CD4-positive, alpha-beta memory T cell (primary cell): ENCODE measurements at regions of chr15 and their contacts with region 1.

Region 1: GRCh38 chr15:40593588-40594428 is at the start of gene KNL1:
- DNase-seq: peak; percentile 89 to 93 (median 91)
- H3K4me3 ChIP-seq: peak within 1 kb of the TSS; percentile 36 to 94
- H3K4me3 Mint-ChIP-seq: peak within 1 kb of the TSS; percentile 93 to 100 (median 96)
- H3K27ac ChIP-seq: peak within 1 kb of the TSS; percentile 90
- H3K27ac Mint-ChIP-seq: peak within 1 kb of the TSS; percentile 96 to 100 (median 99)
- H3K4me1 ChIP-seq: peaks cover 31% of the 10 kb centered on the region
- H3K4me1 Mint-ChIP-seq: peaks cover 18 to 46% (median 31%) of the 10 kb centered on the region in 4 donors
- H3K27me3 ChIP-seq: no peaks in the 10 kb centered on the region
- H3K27me3 Mint-ChIP-seq: peaks cover 0 to 2% of the 10 kb centered on the region in 2 donors
- total RNA-seq, gene KNL1: 0.99 to 1.2 TPM

Region 2: GRCh38 chr15:40564591-40565332 is 29.0 kb before region 1 on chr15 and contains the start of gene CCDC32:
- CTCF ChIA-PET with region 1: interaction called, 16 read pairs
- POLR2A ChIA-PET with region 1: interaction called, 18 read pairs
- intact Hi-C with region 1: loop called (anchors 1 kb)
- DNase-seq: peak; percentile 93 to 98 (median 96)
- H3K4me3 ChIP-seq: peak within 1 kb of the TSS; percentile 97 to 98
- H3K4me3 Mint-ChIP-seq: peak within 1 kb of the TSS; percentile 95 to 98 (median 97)
- H3K27ac ChIP-seq: peak within 1 kb of the TSS; percentile 92
- H3K27ac Mint-ChIP-seq: peak within 1 kb of the TSS; percentile 89 to 99 (median 98)
- H3K4me1 ChIP-seq: peaks cover 34% of the 10 kb centered on the region
- H3K4me1 Mint-ChIP-seq: peaks cover 26 to 65% (median 42%) of the 10 kb centered on the region in 4 donors
- H3K27me3 ChIP-seq: no peaks in the 10 kb centered on the region
- H3K27me3 Mint-ChIP-seq: no peaks in the 10 kb centered on the region
- total RNA-seq, gene CCDC32: 31.7 to 32.4 TPM

Region 3: DNA sequence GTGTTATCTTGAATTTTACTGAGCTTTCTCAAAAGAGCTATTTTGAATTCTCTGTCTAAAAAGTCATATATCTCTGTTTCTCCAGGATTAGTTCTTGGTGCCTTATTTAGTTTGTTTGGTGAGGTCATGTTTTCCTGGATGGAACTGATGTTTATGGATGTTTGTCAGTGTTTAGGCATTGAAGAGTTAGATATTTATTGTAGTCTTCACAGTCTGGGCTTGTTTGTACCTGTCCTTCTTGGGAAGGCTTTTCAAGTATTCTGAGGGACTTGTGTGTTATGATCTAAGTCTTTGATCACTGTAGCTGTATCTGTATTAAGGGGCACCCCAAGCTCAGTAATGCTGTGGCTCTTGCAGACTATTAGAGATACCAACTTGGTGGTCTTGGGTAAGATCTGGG is 90.6 kb after region 1 on chr15:
- CTCF ChIA-PET with region 1: interaction called, 14 read pairs
- POLR2A ChIA-PET with region 1: no interaction called
- intact Hi-C with region 1: loop called (anchors 5 kb)
- DNase-seq: no peak
- H3K4me3 ChIP-seq: no peak overlapping the region
- H3K4me3 Mint-ChIP-seq: no peak overlapping the region
- H3K27ac ChIP-seq: no peak overlapping the region
- H3K27ac Mint-ChIP-seq: peak overlapping the region in 2 of 7 donors; percentile 51 to 64
- H3K4me1 ChIP-seq: no peaks in the 10 kb centered on the region
- H3K4me1 Mint-ChIP-seq: no peaks in the 10 kb centered on the region
- H3K27me3 ChIP-seq: no peaks in the 10 kb centered on the region
- H3K27me3 Mint-ChIP-seq: no peaks in the 10 kb centered on the region

Region 4: GRCh38 chr15:40754883-40755811 is 161.3 kb after region 1 on chr15 and contains the start of gene RMDN3:
- CTCF ChIA-PET with region 1: no interaction called
- POLR2A ChIA-PET with region 1: interaction called, 3 read pairs
- intact Hi-C with region 1: loop called (anchors 10 kb)
- DNase-seq: peak; percentile 90 to 93 (median 92)
- H3K4me3 ChIP-seq: peak within 1 kb of the TSS; percentile 65 to 96
- H3K4me3 Mint-ChIP-seq: peak within 1 kb of the TSS; percentile 91 to 99 (median 94)
- H3K27ac ChIP-seq: peak within 1 kb of the TSS; percentile 85
- H3K27ac Mint-ChIP-seq: peak within 1 kb of the TSS; percentile 82 to 98 (median 95)
- H3K4me1 ChIP-seq: peaks cover 31% of the 10 kb centered on the region
- H3K4me1 Mint-ChIP-seq: peaks cover 11 to 40% (median 26%) of the 10 kb centered on the region in 4 donors
- H3K27me3 ChIP-seq: no peaks in the 10 kb centered on the region
- H3K27me3 Mint-ChIP-seq: no peaks in the 10 kb centered on the region
- total RNA-seq, gene RMDN3: 24.5 to 26.7 TPM

Region 5: GRCh38 chr15:40782580-40783227 is 188.9 kb after region 1 on chr15:
- CTCF ChIA-PET with region 1: interaction called, 53 read pairs
- POLR2A ChIA-PET with region 1: interaction called, 4 read pairs
- intact Hi-C with region 1: loop called (anchors 1 kb)
- DNase-seq: peak; percentile 74 to 79 (median 75)
- H3K4me3 ChIP-seq: no peak overlapping the region
- H3K4me3 Mint-ChIP-seq: no peak overlapping the region
- H3K27ac ChIP-seq: no peak overlapping the region
- H3K27ac Mint-ChIP-seq: peak overlapping the region in 3 of 7 donors; percentile 23 to 73 (median 70)
- H3K4me1 ChIP-seq: peaks cover 12% of the 10 kb centered on the region
- H3K4me1 Mint-ChIP-seq: peaks cover 13 to 24% (median 17%) of the 10 kb centered on the region in 4 donors
- H3K27me3 ChIP-seq: no peaks in the 10 kb centered on the region
- H3K27me3 Mint-ChIP-seq: no peaks in the 10 kb centered on the region

Region 6: GRCh38 chr15:40807028-40807887 is 213.4 kb after region 1 on chr15 and contains the starts of genes DNAJC17 and ZFYVE19:
- CTCF ChIA-PET with region 1: interaction called, 3 read pairs
- POLR2A ChIA-PET with region 1: no interaction called
- intact Hi-C with region 1: loop called (anchors 1 kb)
- DNase-seq: peak; percentile 90 to 97 (median 91)
- H3K4me3 ChIP-seq: peak within 1 kb of the TSS; percentile 95 to 100
- H3K4me3 Mint-ChIP-seq: peak within 1 kb of the TSS; percentile 96 to 100 (median 98)
- H3K27ac ChIP-seq: peak within 1 kb of the TSS; percentile 97
- H3K27ac Mint-ChIP-seq: peak within 1 kb of the TSS; percentile 92 to 100 (median 98)
- H3K4me1 ChIP-seq: peaks cover 20% of the 10 kb centered on the region
- H3K4me1 Mint-ChIP-seq: peaks cover 15 to 33% (median 22%) of the 10 kb centered on the region in 4 donors
- H3K27me3 ChIP-seq: no peaks in the 10 kb centered on the region
- H3K27me3 Mint-ChIP-seq: no peaks in the 10 kb centered on the region
- total RNA-seq, gene DNAJC17: 40.5 to 43.9 TPM
- total RNA-seq, gene ZFYVE19: 34.1 to 35.0 TPM

Region 7: GRCh38 chr15:41116116-41116871 is 522.5 kb after region 1 on chr15 and contains the start of gene INO80:
- CTCF ChIA-PET with region 1: no interaction called
- POLR2A ChIA-PET with region 1: no interaction called
- intact Hi-C with region 1: loop called (anchors 5 kb)
- DNase-seq: peak; percentile 96 to 97 (median 97)
- H3K4me3 ChIP-seq: peak within 1 kb of the TSS; percentile 95 to 100
- H3K4me3 Mint-ChIP-seq: peak within 1 kb of the TSS; percentile 93 to 99 (median 96)
- H3K27ac ChIP-seq: peak within 1 kb of the TSS; percentile 84
- H3K27ac Mint-ChIP-seq: peak within 1 kb of the TSS; percentile 87 to 100 (median 99)
- H3K4me1 ChIP-seq: peaks cover 31% of the 10 kb centered on the region
- H3K4me1 Mint-ChIP-seq: peaks cover 15 to 36% (median 26%) of the 10 kb centered on the region in 4 donors
- H3K27me3 ChIP-seq: no peaks in the 10 kb centered on the region
- H3K27me3 Mint-ChIP-seq: peaks cover 0 to 2% of the 10 kb centered on the region in 2 donors
- total RNA-seq, gene INO80: 29.7 to 34.4 TPM